CD4-positive, alpha-beta T cell (primary cell): ENCODE measurements at regions of chr13 and their contacts with region 1.

Region 1: DNA sequence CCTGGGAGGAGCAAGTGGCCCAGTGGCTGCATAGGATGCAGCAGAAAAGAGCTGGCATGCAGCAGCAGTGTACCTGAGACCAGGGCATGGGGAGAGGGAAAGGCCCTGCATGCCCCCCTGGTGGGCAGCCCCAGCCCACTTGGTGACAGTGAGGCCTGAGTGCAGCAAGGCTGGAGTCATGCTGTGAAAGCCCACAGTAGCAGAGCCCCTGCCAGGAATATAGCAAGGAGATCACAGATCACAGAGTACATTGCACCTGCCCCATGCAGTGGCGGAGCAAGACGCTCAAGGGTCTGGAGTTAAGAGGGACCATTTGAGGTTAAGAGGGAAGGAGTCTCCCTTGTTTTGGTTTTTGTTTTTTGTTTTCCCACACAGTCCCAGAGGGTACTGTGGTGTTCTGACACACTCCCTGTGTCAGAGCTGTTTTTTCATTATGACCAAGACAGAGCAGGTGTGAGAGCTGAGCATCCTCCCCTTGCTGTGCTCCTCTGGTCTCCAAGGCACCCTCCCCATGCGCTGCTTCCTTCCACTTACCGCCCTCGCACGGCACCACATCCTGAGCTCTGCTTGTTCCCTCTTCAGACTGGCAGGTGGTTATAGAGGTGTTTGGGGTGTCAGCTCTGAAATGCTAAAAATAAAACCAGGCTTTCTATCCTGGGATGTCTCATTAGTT is 85.0 kb upstream of the UBL3 start:
- DNase-seq: peak; percentile 50 to 93 (median 73)
- ATAC-seq: peak; percentile 92
- H3K4me3 ChIP-seq: peak overlapping the region; percentile 64
- H3K4me3 Mint-ChIP-seq: peak overlapping the region; percentile 90
- H3K27ac ChIP-seq: peak overlapping the region; percentile 73 to 82
- H3K27ac Mint-ChIP-seq: peak overlapping the region; percentile 93
- H3K4me1 ChIP-seq: peaks cover 64% of the 10 kb centered on the region
- H3K4me1 Mint-ChIP-seq: peaks cover 65% of the 10 kb centered on the region
- H3K27me3 ChIP-seq: no peaks in the 10 kb centered on the region
- H3K27me3 Mint-ChIP-seq: no peaks in the 10 kb centered on the region
- CTCF ChIP-seq: no peak

Region 2: GRCh38 chr13:29771247-29771646 is 164.2 kb before region 1 on chr13:
- CTCF ChIA-PET with region 1: interaction called, 4 read pairs
- POLR2A ChIA-PET with region 1: interaction called, 10 read pairs
- intact Hi-C with region 1: loop called (anchors 5 to 10 kb)
- DNase-seq: peak in 3 of 14 experiments; percentile 64 to 69 (median 67)
- ATAC-seq: peak; percentile 75
- H3K4me3 ChIP-seq: no peak overlapping the region
- H3K4me3 Mint-ChIP-seq: no peak overlapping the region
- H3K27ac ChIP-seq: no peak overlapping the region
- H3K27ac Mint-ChIP-seq: no peak overlapping the region
- H3K4me1 ChIP-seq: no peaks in the 10 kb centered on the region
- H3K4me1 Mint-ChIP-seq: peaks cover 8% of the 10 kb centered on the region
- H3K27me3 ChIP-seq: no peaks in the 10 kb centered on the region
- H3K27me3 Mint-ChIP-seq: no peaks in the 10 kb centered on the region
- CTCF ChIP-seq: peak; percentile 78

Region 3: DNA sequence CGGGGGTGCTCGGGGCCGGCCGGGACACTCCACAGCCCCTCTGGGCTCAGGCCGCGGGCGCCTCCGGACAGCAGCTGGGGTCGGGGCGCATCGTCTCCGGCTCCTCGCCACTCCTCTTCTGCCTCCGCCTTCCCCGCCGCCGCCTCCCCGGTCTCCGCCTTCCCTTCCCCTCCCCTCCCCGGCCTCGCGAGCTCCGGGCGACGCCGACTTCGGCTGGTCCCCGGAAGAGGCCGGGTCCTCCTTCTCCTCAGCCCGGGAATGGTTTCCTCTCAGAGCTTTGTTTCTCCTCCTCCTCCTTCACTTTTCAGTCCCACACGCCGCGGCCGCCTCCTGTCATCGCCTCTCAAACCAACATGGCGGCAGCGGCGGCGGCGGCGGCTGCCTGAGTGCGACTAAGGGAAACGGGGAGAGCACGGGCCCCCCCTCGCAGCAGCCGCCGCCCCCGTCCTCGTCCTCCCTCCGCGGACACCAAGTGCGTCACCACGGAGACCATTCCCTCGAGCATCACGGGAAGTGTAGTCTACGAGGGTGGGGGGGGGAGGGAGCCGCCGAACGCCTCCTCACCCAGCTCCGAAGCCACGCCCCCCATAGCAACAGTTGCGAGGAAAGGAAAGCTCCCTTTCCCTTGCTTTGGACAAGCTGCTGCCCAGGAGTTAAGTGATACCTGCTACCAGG is 85.1 kb before region 1 on chr13 and contains the start of gene UBL3:
- CTCF ChIA-PET with region 1: interaction called, 4 read pairs
- POLR2A ChIA-PET with region 1: interaction called, 184 read pairs
- intact Hi-C with region 1: loop called (anchors 5 kb)
- DNase-seq: peak; percentile 89 to 97 (median 93)
- ATAC-seq: peak; percentile 87
- H3K4me3 ChIP-seq: peak within 1 kb of the TSS; percentile 82
- H3K4me3 Mint-ChIP-seq: peak within 1 kb of the TSS; percentile 99
- H3K27ac ChIP-seq: peak within 1 kb of the TSS; percentile 92 to 93
- H3K27ac Mint-ChIP-seq: peak within 1 kb of the TSS; percentile 86
- H3K4me1 ChIP-seq: peaks cover 4% of the 10 kb centered on the region
- H3K4me1 Mint-ChIP-seq: peaks cover 20% of the 10 kb centered on the region
- H3K27me3 ChIP-seq: no peaks in the 10 kb centered on the region
- H3K27me3 Mint-ChIP-seq: no peaks in the 10 kb centered on the region
- CTCF ChIP-seq: no peak
- total RNA-seq, gene UBL3: 39.5 to 41.9 TPM

Region 4: GRCh38 chr13:29923554-29924481 is 11.6 kb before region 1 on chr13:
- CTCF ChIA-PET with region 1: interaction called, 19 read pairs
- POLR2A ChIA-PET with region 1: interaction called, 53 read pairs
- intact Hi-C with region 1: no loop called
- DNase-seq: peak in 13 of 14 experiments; percentile 19 to 78 (median 42)
- ATAC-seq: peak; percentile 75
- H3K4me3 ChIP-seq: no peak overlapping the region
- H3K4me3 Mint-ChIP-seq: no peak overlapping the region
- H3K27ac ChIP-seq: no peak overlapping the region
- H3K27ac Mint-ChIP-seq: no peak overlapping the region
- H3K4me1 ChIP-seq: peaks cover 22% of the 10 kb centered on the region
- H3K4me1 Mint-ChIP-seq: peaks cover 52% of the 10 kb centered on the region
- H3K27me3 ChIP-seq: no peaks in the 10 kb centered on the region
- H3K27me3 Mint-ChIP-seq: no peaks in the 10 kb centered on the region
- CTCF ChIP-seq: peak; percentile 70

Region 5: DNA sequence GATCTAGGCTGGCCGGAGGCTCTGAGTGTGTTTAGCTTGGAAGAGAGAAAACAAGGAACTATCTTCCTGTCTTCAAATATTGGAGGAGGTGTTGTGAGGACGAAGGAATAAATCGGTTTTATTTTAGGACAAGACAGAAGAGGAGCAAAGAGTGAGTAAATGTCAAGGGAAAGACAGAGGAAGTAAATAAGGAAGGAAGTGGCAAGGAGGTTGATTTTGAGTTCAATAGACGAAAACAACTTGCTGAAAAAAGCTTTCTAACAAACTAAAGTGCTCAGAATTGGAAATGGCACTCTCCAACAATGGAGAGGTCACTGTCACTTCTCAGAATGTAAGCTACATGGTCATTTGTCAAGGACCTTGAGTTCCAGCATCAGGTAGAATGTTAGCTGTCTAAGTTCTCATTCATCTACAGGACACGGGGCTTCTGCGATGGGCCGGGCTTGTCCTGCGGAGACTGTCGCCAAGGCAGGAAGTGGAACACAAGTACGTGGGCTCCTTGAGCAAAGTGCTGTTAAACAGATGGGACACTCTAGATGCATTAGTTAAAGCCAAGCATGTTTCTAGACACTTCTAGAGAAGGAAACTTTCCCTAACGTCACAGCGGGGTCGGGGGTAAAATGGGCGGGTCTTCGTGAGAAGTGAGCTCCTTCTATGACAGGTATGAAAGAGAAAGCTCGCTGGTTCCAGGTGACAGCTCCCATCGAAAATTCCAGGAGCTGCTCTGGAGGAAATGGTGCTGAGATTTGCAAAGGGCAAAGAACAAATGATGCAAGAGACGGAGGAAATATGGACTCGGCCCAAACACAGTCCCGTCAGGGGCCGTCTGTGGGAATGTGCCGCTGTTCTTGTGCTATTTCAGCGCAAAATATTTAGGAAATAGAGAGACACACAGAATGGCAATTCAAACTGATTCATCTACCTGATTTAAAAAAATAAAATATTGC is 18.9 kb after region 1 on chr13:
- CTCF ChIA-PET with region 1: interaction called, 3 read pairs
- POLR2A ChIA-PET with region 1: interaction called, 160 read pairs
- intact Hi-C with region 1: loop called in 1 of 2 experiments (anchors 1 kb)
- DNase-seq: peak in 13 of 14 experiments; percentile 16 to 72 (median 44)
- ATAC-seq: peak; percentile 76
- H3K4me3 ChIP-seq: peak overlapping the region; percentile 51
- H3K4me3 Mint-ChIP-seq: peak overlapping the region; percentile 90
- H3K27ac ChIP-seq: peak overlapping the region in 1 of 2 donors; percentile 61
- H3K27ac Mint-ChIP-seq: peak overlapping the region; percentile 88
- H3K4me1 ChIP-seq: peaks cover 34% of the 10 kb centered on the region
- H3K4me1 Mint-ChIP-seq: peaks cover 65% of the 10 kb centered on the region
- H3K27me3 ChIP-seq: no peaks in the 10 kb centered on the region
- H3K27me3 Mint-ChIP-seq: no peaks in the 10 kb centered on the region
- CTCF ChIP-seq: no peak

Region 6: DNA sequence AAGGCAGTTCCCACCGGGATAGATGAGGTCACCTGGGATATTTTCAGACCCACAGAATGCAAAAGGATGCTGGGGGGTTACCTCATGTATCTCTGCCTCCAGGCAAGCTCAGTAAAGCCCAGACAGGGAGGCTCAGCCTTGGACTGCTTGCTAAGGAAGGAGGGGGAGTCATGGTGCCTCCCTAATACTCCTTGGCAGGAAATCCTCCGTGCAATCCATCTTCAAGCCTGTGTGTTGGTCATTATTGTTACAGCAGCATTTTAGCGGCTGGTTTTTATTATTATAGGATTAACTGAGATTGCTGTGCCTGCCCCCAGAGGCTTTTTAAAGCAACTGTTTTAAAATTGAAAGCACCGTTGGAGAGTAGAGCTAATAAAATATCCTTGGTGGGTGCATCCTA is 103.4 kb after region 1 on chr13:
- CTCF ChIA-PET with region 1: no interaction called
- POLR2A ChIA-PET with region 1: interaction called, 4 read pairs
- intact Hi-C with region 1: loop called in 1 of 2 experiments (anchors 5 kb)
- DNase-seq: no peak
- ATAC-seq: no peak
- H3K4me3 ChIP-seq: no peak overlapping the region
- H3K4me3 Mint-ChIP-seq: no peak overlapping the region
- H3K27ac ChIP-seq: no peak overlapping the region
- H3K27ac Mint-ChIP-seq: no peak overlapping the region
- H3K4me1 ChIP-seq: no peaks in the 10 kb centered on the region
- H3K4me1 Mint-ChIP-seq: no peaks in the 10 kb centered on the region
- H3K27me3 ChIP-seq: peaks cover 0 to 2% of the 10 kb centered on the region in 2 experiments
- H3K27me3 Mint-ChIP-seq: peaks cover 9% of the 10 kb centered on the region
- CTCF ChIP-seq: no peak